Transverse colon (tissue), 4 donors: ENCODE measurements at regions of chr19 and their contacts with region 1.

Region 1: DNA sequence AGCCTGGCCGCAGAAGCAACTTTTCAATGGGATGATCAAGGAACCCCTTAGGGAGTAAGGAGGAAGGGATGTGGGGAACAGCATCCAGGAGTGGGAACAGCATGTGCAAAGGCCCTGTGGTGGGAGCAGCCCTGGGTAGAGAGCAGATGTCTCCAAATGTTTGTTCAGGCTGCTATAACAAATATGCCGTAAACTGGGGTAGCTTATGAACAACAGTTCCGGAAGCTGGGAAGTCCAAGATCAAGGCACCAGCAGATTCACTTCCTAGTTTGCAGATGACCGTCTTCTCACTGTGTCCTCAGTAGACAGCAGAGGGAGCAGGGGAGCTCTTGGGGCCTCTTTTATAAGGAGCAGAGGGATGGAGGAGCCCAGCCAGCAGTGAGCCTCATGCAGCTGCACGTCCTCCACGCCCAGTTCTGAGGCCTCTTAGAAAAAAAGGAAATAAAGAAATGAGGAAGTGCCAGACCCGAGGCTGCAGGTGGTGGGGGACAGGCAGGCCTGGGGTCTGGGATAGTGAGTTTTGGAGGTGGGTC is 4.2 kb upstream of the LRRC25 start:
- DNase-seq: peak; percentile 85
- H3K4me3 ChIP-seq: no peak overlapping the region
- H3K27ac ChIP-seq: peak overlapping the region; percentile 77 to 86 (median 82)
- H3K4me1 ChIP-seq: peaks cover 0 to 50% (median 38%) of the 10 kb centered on the region in 4 donors
- H3K27me3 ChIP-seq: peaks cover 13% of the 10 kb centered on the region
- CTCF ChIP-seq: peak; percentile 19 to 65 (median 54)
- EP300 ChIP-seq: no peak
- POLR2A ChIP-seq: peak; percentile 68

Region 2: DNA sequence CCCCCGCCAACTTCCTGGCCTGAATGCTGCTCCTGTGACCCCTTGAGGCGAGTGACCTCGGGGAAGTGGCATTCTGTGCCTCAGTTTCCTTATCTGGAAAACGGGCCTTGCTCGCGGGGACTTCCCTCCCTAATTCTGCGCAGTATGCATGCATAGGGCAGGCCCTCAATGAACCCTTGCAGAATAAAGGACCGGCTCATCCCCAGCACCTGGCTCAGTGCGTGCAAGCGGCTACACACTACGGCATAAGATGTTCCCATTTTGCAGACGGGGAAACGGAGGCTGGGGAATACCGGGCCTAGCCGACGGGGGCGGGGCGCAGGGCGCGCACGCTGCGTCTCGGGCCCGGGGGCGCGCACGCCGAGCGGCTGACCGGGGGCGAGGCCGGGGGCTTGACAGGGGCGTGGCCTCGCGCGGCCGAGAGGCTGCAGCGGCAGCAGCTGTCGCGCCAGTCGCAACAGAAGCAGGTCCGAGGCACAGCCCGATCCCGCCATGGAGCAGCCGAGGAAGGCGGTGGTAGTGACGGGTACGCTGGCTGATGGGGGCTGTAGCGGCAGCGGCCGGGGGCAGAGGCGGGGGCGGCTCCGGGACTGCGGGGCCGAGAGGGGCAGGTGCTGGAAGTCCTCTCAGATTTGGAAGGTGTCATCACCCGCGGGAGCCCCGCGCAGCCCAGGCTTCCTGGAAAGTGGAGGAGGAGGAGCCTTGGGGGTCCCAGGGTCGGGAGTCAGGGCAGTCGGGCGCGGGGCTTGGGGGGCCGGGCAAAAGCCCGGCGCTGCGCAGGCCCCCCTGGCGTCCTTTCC is 61.3 kb before region 1 on chr19 and contains the start of gene PGPEP1:
- in situ Hi-C with region 1: loop called in 1 of 4 experiments (anchors 10 kb)
- intact Hi-C with region 1: no loop called
- DNase-seq: peak; percentile 83
- H3K4me3 ChIP-seq: peak within 1 kb of the TSS; percentile 54 to 87 (median 74)
- H3K27ac ChIP-seq: peak within 1 kb of the TSS; percentile 88 to 93 (median 90)
- H3K4me1 ChIP-seq: peaks cover 0 to 48% (median 23%) of the 10 kb centered on the region in 4 donors
- H3K27me3 ChIP-seq: no peaks in the 10 kb centered on the region
- CTCF ChIP-seq: no peak
- EP300 ChIP-seq: no peak
- POLR2A ChIP-seq: peak; percentile 73
- total RNA-seq, gene PGPEP1: 59.7 to 110 (median 73.0) TPM

Region 3: GRCh38 chr19:18349524-18350128 is 52.0 kb before region 1 on chr19:
- in situ Hi-C with region 1: loop called in 3 of 4 experiments (anchors 5 to 10 kb)
- intact Hi-C with region 1: no loop called
- DNase-seq: peak; percentile 63
- H3K4me3 ChIP-seq: no peak overlapping the region
- H3K27ac ChIP-seq: no peak overlapping the region
- H3K4me1 ChIP-seq: peaks cover 0 to 18% (median 9%) of the 10 kb centered on the region in 4 donors
- H3K27me3 ChIP-seq: no peaks in the 10 kb centered on the region
- CTCF ChIP-seq: peak; percentile 58 to 85 (median 77)
- EP300 ChIP-seq: no peak
- POLR2A ChIP-seq: no peak